A673 (cell line): ENCODE measurements at regions of chr6 and their contacts with region 1.

Region 1: DNA sequence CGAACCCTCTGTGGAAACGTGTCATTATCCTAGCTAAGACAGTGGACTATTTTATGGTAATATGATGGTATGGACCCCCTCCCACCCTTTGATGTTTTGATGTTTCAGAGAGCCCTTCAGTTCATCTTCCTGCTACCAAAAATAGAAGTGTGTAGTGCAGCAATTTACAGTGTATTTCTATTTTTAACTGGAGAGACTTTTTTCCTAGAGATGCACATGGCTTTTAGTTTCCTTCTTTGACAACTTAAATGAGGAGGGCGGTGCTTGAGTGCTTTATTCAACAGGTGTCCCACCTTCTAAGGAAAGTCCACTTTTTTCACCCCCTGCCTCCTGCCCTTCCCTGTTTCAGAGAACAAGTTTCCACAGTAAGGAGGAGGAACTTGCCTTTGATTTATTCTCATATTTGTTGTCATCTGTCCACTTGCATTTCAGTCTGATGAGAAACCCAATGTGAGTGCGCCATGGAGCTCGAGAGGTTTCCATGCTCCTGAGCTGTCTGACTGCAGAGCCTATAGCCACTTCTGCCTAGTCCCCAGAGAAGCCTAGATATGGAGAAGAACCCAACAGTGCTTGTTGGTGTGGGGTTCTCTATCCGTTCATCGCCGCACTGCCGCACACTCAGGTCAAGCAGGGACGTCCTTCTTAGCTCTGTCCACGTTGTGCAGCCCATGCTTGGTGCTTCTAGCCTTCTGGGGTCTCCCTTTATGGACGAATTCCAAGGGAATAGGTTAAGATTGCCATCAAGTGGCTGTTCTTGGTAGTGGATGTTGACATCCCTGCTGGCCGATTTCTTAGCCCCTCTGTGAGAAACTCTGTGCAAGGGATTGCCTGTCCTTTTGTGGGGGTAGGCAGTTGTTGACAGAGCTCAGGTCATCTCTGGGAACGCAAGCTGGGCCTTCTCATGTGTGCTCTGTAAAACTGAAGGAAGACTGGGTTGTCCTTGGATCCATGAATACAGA is 144.2 kb downstream of the JARID2 start:
- DNase-seq: peak; percentile 82
- H3K4me3 ChIP-seq: no peak overlapping the region
- H3K27ac ChIP-seq: peak overlapping the region; percentile 3
- H3K4me1 ChIP-seq: peaks cover 63% of the 10 kb centered on the region
- H3K27me3 ChIP-seq: no peaks in the 10 kb centered on the region
- CTCF ChIP-seq: peak; percentile 78

Region 2: DNA sequence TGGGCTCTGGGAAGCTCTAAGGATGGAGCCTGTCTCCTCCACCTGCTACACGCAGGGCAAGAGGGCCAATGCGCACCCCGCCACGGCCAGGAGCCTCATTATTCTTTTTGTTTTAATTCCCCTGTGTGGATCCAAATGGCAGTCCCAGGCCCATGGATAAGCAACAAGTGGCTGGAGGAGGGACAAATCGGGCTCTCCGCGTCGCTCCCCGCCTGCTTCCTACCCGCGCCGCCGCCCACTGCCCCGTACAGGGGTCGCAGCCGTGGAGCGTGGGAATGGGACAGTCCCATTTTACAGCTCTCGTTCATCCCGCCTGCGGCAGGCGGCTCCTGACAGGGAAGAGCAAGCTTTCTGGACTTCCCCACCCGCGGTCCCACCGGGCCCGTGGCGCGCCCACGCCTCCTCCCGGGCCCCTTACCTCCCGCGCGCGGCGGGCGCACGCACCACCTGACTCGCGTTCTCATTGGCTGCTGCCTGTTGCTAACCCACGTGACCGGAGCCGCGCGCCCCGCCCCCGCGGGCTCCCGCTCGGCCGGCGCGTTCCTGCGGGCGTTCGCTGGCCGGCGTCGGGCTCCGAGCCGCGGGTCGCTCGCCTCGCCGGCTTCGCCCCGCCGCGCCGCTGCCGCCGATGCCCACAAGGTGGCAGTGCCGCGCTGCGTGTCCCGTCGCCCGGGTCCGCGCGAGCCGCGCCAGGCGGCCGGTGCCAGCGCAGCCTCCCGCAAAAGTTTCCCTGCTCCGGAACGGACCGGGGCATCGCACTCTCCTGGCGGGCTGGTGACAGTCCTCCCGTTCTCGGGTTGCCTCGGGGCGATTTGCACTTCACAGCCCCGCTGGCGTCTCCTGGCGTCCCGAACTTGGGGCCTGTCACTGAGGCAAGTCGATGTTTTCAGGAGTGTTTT is 1179.1 kb before region 1 on chr6:
- CTCF ChIA-PET with region 1: no interaction called
- POLR2A ChIA-PET with region 1: no interaction called
- intact Hi-C with region 1: loop called (anchors 5 kb)
- DNase-seq: peak; percentile 96
- H3K4me3 ChIP-seq: peak overlapping the region; percentile 54
- H3K27ac ChIP-seq: peak overlapping the region; percentile 91
- H3K4me1 ChIP-seq: peaks cover 38% of the 10 kb centered on the region
- H3K27me3 ChIP-seq: no peaks in the 10 kb centered on the region
- CTCF ChIP-seq: peak; percentile 47; the same call in 1 of the 2 replicates

Region 3: GRCh38 chr6:15137086-15137485 is 253.0 kb before region 1 on chr6:
- CTCF ChIA-PET with region 1: no interaction called
- POLR2A ChIA-PET with region 1: no interaction called
- intact Hi-C with region 1: no loop called
- DNase-seq: no peak
- H3K4me3 ChIP-seq: no peak overlapping the region
- H3K27ac ChIP-seq: no peak overlapping the region
- H3K4me1 ChIP-seq: no peaks in the 10 kb centered on the region
- H3K27me3 ChIP-seq: no peaks in the 10 kb centered on the region
- CTCF ChIP-seq: no peak

Region 4: DNA sequence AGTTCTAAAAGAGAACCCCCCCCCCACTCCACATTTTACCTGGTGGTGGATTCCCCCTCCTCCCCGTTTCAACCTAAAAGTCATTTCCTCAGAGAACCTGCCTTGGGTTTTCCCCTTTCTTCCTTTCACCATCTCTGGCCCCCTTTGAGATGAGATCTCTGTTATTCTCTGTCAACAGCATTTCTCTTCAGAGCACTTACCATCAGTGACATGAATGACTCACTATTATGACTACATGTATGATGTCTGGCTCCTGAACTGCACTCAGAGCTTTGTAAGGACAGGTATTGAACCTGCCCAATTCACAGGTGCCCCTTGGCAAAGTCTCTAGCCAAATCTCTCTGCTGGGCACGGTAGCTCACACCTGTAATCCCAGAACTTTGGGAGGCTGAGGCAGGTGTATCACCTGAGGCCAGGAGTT is 205.6 kb before region 1 on chr6:
- CTCF ChIA-PET with region 1: interaction called, 3 read pairs
- POLR2A ChIA-PET with region 1: no interaction called
- intact Hi-C with region 1: loop called (anchors 2 kb)
- DNase-seq: peak; percentile 15
- H3K4me3 ChIP-seq: no peak overlapping the region
- H3K27ac ChIP-seq: peak overlapping the region; percentile 65
- H3K4me1 ChIP-seq: peaks cover 7% of the 10 kb centered on the region
- H3K27me3 ChIP-seq: no peaks in the 10 kb centered on the region
- CTCF ChIP-seq: no peak

Region 5: DNA sequence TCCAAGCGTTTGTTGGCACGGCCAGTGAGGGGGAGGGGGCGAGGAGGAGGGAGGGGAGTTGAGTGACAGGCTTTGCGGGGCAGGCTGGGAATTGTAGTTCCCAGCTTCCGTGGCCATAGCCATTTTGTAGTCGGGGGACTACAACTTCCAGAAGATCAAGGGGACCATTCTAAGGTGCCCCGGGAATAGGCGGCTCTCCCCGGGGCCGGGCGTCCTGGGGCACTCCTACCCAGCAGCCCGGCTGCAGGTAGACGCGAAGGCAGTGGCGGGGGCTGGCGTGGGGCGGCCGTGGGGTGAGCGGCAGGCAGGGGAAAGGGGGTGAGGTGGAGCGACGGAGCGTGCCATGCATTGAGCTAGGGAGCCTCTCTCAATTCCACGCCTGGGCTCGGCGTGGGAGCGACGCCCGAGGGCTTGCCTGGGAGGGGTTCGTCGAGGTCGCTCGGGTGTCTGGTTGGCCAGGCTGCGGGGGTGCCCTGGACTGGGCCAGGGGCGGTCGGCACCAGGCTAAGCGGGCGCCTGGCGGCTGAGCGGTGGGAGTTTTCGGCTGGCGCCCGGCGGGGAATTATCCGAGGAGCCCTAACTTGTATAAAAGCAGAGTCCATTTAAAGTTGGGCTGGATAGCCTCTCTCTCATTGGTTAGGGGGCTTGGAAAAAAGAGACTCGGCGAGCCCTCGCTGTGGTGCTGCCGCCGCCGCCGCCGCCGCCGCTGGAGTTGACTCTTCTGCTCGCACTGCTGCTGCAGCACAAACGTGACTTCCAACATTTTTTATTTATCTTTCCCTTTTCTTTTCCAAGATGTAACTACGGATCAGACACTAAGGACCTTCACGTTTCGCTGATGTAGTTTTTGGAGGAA is 144.5 kb before region 1 on chr6 and contains the start of gene JARID2:
- CTCF ChIA-PET with region 1: no interaction called
- POLR2A ChIA-PET with region 1: no interaction called
- intact Hi-C with region 1: loop called (anchors 2 kb)
- DNase-seq: peak; percentile 99
- H3K4me3 ChIP-seq: peak within 1 kb of the TSS; percentile 71
- H3K27ac ChIP-seq: peak within 1 kb of the TSS; percentile 96
- H3K4me1 ChIP-seq: peaks cover 18% of the 10 kb centered on the region
- H3K27me3 ChIP-seq: no peaks in the 10 kb centered on the region
- CTCF ChIP-seq: no peak
- total RNA-seq, gene JARID2: 29.4 and 34.1 TPM in 2 replicates

Region 6: DNA sequence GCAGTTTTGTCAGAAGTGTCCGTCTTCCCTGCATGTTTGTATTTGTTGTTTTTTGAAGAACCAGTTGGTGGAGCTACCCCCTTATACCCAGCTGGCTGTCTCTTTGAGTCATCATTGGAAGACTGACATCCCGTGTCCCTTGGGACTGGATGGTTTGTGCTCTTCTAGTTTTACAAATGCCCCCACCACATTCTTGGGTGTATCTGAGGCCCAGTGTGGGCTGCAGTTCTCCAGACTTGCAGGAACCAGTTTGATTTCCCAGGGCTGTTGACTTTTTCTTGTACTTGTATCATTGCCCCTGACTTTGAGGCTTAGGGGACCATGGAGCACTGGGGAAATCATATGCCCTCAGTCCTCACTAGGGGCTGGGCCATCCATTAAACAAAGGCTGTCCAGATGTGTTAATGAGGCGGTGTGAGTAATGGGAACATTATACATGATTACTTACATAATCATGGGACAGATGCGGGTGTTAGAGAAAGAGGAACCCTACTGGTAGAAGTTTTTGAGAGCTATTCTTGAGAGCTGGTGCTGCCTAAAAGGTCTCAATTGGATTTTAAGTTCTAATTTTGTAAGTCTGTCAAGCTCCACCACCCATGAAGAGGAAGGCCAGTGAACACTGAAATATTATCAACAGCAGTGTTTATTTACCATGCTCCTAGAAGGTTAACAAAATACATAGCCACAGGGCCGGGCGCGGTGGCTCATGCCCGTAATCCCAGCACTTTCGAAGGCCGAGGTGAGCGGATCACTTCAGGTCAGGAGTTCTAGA is 135.8 kb before region 1 on chr6:
- CTCF ChIA-PET with region 1: interaction called, 3 read pairs
- POLR2A ChIA-PET with region 1: no interaction called
- intact Hi-C with region 1: loop called (anchors 2 kb)
- DNase-seq: peak; percentile 96
- H3K4me3 ChIP-seq: no peak overlapping the region
- H3K27ac ChIP-seq: peak overlapping the region; percentile 5
- H3K4me1 ChIP-seq: peaks cover 94% of the 10 kb centered on the region
- H3K27me3 ChIP-seq: no peaks in the 10 kb centered on the region
- CTCF ChIP-seq: peak; percentile 56

Region 7: DNA sequence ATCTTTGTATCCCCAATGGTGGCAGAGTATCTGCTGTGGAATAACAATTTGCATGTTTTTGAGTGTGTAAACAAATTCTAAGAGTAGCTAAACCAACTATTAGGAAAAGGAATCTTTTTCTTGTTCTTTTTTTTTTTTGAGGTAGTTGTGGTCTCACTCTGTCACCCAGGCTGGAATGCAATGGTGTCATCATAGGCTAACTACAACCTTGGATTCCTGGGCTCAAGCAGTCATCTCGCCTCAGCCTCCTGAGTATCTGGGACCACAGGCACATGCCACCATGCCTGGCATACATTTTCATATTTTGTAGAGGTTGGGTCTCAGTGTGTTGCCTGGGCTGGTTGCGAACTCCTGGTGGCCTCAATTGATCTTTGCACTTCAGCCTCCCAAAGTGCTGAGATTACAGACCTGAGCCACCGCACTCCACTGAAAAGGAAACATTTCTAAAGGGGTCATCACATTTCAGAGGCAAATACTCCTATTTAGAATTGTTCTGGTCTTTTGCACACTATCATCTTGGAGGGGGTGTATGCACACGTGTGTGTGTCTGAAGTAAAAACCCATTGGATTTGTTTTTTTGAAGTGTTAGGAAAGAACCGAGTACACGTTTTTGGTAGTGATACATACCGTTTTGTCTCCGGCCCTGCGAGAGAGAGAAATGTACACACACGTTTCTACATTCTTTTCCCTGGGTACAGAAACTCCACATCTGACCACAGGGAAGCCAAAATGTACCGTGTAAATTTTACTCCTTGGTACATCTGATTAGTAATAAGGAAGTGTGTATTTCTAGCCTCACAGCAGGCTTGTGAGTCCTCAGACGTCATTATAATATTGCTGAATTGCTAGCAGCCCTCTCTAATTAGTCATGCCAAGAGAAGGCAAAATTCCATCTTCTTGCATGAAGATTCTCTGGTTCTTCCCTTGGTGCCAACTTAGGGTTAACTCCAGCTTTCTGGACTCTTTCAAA is 39.4 kb after region 1 on chr6:
- CTCF ChIA-PET with region 1: no interaction called
- POLR2A ChIA-PET with region 1: interaction called, 14 read pairs
- intact Hi-C with region 1: no loop called
- DNase-seq: peak; percentile 81
- H3K4me3 ChIP-seq: no peak overlapping the region
- H3K27ac ChIP-seq: no peak overlapping the region
- H3K4me1 ChIP-seq: peaks cover 75% of the 10 kb centered on the region
- H3K27me3 ChIP-seq: no peaks in the 10 kb centered on the region
- CTCF ChIP-seq: no peak

Region 8: DNA sequence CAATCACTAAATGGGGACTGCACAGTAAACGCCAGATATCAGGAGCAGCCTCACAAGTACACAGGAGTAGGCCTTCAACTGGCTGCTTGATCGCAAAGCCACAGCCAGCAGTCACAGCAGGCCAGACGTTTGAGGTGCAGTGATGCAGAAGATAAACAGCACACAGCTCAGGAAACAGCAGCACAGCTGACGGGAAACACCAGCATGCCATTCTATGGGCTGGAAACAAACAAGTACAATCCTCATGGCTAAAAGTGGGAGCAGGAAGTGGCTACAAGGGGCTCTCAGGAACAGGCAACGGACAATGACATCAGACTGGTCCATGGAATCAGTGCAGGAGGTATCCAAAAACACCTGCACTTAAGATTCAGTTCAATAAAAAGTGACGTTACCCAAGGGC is 161.8 kb after region 1 on chr6:
- CTCF ChIA-PET with region 1: no interaction called
- POLR2A ChIA-PET with region 1: no interaction called
- intact Hi-C with region 1: no loop called
- DNase-seq: peak; percentile 75
- H3K4me3 ChIP-seq: no peak overlapping the region
- H3K27ac ChIP-seq: no peak overlapping the region
- H3K4me1 ChIP-seq: peaks cover 60% of the 10 kb centered on the region
- H3K27me3 ChIP-seq: no peaks in the 10 kb centered on the region
- CTCF ChIP-seq: no peak

Region 9: GRCh38 chr6:15628499-15629131 is 238.6 kb after region 1 on chr6:
- CTCF ChIA-PET with region 1: no interaction called
- POLR2A ChIA-PET with region 1: no interaction called
- intact Hi-C with region 1: loop called (anchors 5 kb)
- DNase-seq: peak; percentile 44
- H3K4me3 ChIP-seq: no peak overlapping the region
- H3K27ac ChIP-seq: peak overlapping the region; percentile 71
- H3K4me1 ChIP-seq: peaks cover 52% of the 10 kb centered on the region
- H3K27me3 ChIP-seq: no peaks in the 10 kb centered on the region
- CTCF ChIP-seq: no peak